Natural killer cell (primary cell): ENCODE measurements at regions of chr10 and their contacts with region 1.

Region 1: GRCh38 chr10:67764012-67764822 is 68.2 kb upstream of the CTNNA3 start:
- DNase-seq: peak; percentile 98 to 99
- ATAC-seq: peak; percentile 83 to 92 (median 83)
- H3K4me3 ChIP-seq: peak overlapping the region; percentile 88
- H3K4me3 Mint-ChIP-seq: peak overlapping the region; percentile 93
- H3K27ac ChIP-seq: peak overlapping the region; percentile 91
- H3K27ac Mint-ChIP-seq: peak overlapping the region; percentile 98
- H3K4me1 ChIP-seq: peaks cover 9% of the 10 kb centered on the region
- H3K4me1 Mint-ChIP-seq: peaks cover 10 to 24% of the 10 kb centered on the region in 2 donors
- H3K27me3 ChIP-seq: no peaks in the 10 kb centered on the region
- H3K27me3 Mint-ChIP-seq: peaks cover 4 to 13% of the 10 kb centered on the region in 2 donors
- CTCF ChIP-seq: no peak

Region 2: GRCh38 chr10:68074775-68075549 is 310.7 kb after region 1 on chr10 and contains the start of gene HERC4:
- intact Hi-C with region 1: loop called (anchors 10 kb)
- DNase-seq: peak; percentile 83 to 96
- ATAC-seq: peak; percentile 87 to 97 (median 90)
- H3K4me3 ChIP-seq: peak within 1 kb of the TSS; percentile 78
- H3K4me3 Mint-ChIP-seq: peak within 1 kb of the TSS; percentile 94
- H3K27ac ChIP-seq: peak within 1 kb of the TSS; percentile 95
- H3K27ac Mint-ChIP-seq: peak within 1 kb of the TSS; percentile 92 to 94
- H3K4me1 ChIP-seq: peaks cover 5% of the 10 kb centered on the region
- H3K4me1 Mint-ChIP-seq: peaks cover 31 to 32% of the 10 kb centered on the region in 2 donors
- H3K27me3 ChIP-seq: no peaks in the 10 kb centered on the region
- H3K27me3 Mint-ChIP-seq: no peaks in the 10 kb centered on the region
- CTCF ChIP-seq: no peak
- total RNA-seq, gene HERC4: 78.4 to 104 (median 83.9) TPM